HepG2 (cell line): ENCODE measurements at regions of chr16 and their contacts with region 1.

Region 1: GRCh38 chr16:27179500-27180072 is 23.7 kb upstream of the KDM8 start:
- DNase-seq: peak; percentile 72
- ATAC-seq: peak; percentile 93
- H3K4me3 ChIP-seq: no peak overlapping the region
- H3K27ac ChIP-seq: no peak overlapping the region
- H3K4me1 ChIP-seq: peaks cover 10% of the 10 kb centered on the region; the same call in 1 of the 2 replicates
- H3K27me3 ChIP-seq: peaks cover 0 to 6% of the 10 kb centered on the region in 2 experiments; a peak in 1 of 5 replicates
- CTCF ChIP-seq: peak; percentile 98
- EP300 ChIP-seq: no peak
- POLR2A ChIP-seq: no peak
- RAD21 ChIP-seq: peak; percentile 85

Region 2: DNA sequence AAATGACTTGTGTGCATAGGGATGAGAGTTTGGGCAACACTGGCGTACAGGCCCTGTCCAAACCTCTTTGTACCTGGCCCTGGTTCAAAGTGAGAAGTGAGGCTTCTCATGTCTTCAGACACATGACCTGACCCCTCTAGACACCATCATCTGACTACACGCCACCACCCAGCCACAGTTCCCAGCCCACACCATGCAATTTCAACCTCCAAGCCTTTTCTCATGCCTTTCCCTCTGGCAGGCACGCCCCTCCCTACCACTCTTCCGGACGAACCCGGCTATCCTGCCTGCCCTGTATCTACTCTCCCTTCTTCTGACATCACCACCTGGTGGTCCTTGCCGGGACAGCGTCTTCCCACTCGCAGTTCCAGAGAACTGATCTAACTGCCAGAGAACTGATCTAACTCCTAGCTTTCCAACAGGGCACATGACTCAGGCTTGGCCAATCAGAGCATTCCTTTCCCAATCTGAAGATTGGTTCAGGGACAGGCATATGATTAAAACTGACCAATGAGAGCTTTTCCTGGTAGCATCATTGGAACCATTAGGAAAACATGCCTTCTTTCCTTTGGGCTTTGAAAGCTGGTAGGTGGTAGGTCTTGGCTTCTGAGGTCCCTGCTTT is 195.3 kb after region 1 on chr16:
- CTCF ChIA-PET with region 1: interaction called, 18 read pairs
- POLR2A ChIA-PET with region 1: no interaction called
- in situ Hi-C with region 1: no loop called
- intact Hi-C with region 1: loop called (anchors 1 kb)
- DNase-seq: peak; percentile 92
- ATAC-seq: peak; percentile 98
- H3K4me3 ChIP-seq: peak overlapping the region in 2 of 3 experiments; percentile 5 to 38; a peak in 1 of 6 replicates
- H3K27ac ChIP-seq: no peak overlapping the region
- H3K4me1 ChIP-seq: peaks cover 18% of the 10 kb centered on the region
- H3K27me3 ChIP-seq: peaks cover under 1 to 7% of the 10 kb centered on the region in 2 experiments; a peak in 2 of 5 replicates
- CTCF ChIP-seq: peak; percentile 94
- EP300 ChIP-seq: no peak
- POLR2A ChIP-seq: peak in 1 of 2 experiments; percentile 44; a peak in 1 of 4 replicates
- RAD21 ChIP-seq: peak; percentile 72

Region 3: DNA sequence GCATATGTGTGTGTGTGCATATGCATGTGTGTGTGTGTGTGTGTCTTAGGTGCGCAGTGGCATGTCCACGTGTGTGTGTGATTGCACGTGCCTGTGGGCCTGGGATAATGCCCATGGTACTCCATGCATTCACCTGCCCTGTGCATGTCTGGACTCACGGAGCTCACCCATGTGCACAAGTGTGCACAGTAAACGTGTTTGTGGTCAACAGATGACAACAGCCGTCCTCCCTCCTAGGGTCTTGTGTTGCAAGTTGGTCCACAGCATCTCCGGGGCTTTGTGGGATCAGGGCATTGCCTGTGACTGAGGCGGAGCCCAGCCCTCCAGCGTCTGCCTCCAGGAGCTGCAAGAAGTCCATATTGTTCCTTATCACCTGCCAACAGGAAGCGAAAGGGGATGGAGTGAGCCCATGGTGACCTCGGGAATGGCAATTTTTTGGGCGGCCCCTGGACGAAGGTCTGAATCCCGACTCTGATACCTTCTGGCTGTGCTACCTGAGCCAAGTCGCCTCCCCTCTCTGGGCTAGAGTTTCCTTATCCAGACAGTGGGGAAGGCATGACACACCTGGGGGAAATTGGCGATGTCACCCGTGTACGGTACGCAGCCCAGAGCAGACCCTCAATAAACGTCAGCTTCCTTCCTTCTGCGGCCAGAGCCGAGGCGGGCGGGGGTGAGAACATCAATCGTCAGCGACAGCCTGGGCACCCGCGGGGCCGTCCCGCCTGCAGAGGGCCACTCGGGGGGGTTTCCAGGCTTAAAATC is 270.0 kb after region 1 on chr16:
- CTCF ChIA-PET with region 1: no interaction called
- POLR2A ChIA-PET with region 1: no interaction called
- in situ Hi-C with region 1: loop called (anchors 10 kb)
- intact Hi-C with region 1: no loop called
- DNase-seq: no peak
- ATAC-seq: peak; percentile 19
- H3K4me3 ChIP-seq: no peak overlapping the region
- H3K27ac ChIP-seq: no peak overlapping the region
- H3K4me1 ChIP-seq: peaks cover 7% of the 10 kb centered on the region; the same call in 1 of the 2 replicates
- H3K27me3 ChIP-seq: peaks cover 4 to 35% of the 10 kb centered on the region in 2 experiments; a peak in 3 of 5 replicates
- CTCF ChIP-seq: no peak
- EP300 ChIP-seq: no peak
- POLR2A ChIP-seq: no peak
- RAD21 ChIP-seq: no peak

Region 4: GRCh38 chr16:27461483-27462171 is 282.0 kb after region 1 on chr16:
- CTCF ChIA-PET with region 1: interaction called, 17 read pairs
- POLR2A ChIA-PET with region 1: no interaction called
- in situ Hi-C with region 1: loop called (anchors 10 kb)
- intact Hi-C with region 1: loop called (anchors 1 kb)
- DNase-seq: no peak
- ATAC-seq: no peak
- H3K4me3 ChIP-seq: no peak overlapping the region
- H3K27ac ChIP-seq: no peak overlapping the region
- H3K4me1 ChIP-seq: no peaks in the 10 kb centered on the region
- H3K27me3 ChIP-seq: no peaks in the 10 kb centered on the region
- CTCF ChIP-seq: no peak
- EP300 ChIP-seq: no peak
- POLR2A ChIP-seq: no peak
- RAD21 ChIP-seq: no peak